H1 (cell line): ENCODE measurements at regions of chr22 and their contacts with region 1.

Region 1: DNA sequence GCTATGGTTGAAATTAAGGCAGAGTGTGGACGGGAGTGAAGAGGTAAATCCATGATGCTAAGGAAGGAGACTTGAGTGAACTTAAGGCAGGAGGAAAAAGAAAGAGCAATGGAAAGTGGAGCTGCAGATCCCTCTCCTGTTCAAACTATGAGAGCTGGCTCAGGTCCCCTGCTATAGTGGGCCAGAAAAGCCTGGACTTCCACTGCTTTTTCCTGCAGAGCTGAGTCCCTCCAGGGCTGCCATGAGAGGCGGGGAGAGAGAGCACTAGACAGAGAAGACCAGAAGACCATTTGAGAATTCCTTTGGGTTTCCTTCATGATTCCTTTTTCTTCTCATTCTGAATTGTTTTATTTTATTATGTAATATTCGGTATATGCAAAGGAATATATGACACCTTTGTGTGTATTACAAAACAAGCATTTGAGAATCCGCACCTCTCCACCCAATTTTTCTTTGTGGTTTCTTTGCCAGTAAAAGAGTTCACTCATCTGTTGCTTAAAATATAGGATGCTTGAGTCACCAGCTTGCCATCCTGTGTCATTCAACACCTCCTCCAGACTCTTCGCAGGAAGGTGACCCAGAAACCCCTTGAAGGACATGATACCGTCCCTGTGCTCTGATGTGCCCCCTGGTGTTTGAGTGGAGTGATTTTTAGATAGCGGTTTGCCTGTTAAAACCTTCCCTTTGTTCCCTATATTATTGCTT is 24.4 kb downstream of the SREBF2 start:
- DNase-seq: peak; percentile 43 to 63
- H3K4me3 ChIP-seq: no peak overlapping the region
- H3K27ac ChIP-seq: no peak overlapping the region
- H3K4me1 ChIP-seq: peaks cover 0 to 1% (median 0%) of the 10 kb centered on the region in 4 experiments; a peak in 1 of 7 replicates
- H3K27me3 ChIP-seq: no peaks in the 10 kb centered on the region
- CTCF ChIP-seq: peak; percentile 35 to 75 (median 59)
- EP300 ChIP-seq: no peak
- POLR2A ChIP-seq: no peak
- RAD21 ChIP-seq: peak; percentile 53 to 62

Region 2: DNA sequence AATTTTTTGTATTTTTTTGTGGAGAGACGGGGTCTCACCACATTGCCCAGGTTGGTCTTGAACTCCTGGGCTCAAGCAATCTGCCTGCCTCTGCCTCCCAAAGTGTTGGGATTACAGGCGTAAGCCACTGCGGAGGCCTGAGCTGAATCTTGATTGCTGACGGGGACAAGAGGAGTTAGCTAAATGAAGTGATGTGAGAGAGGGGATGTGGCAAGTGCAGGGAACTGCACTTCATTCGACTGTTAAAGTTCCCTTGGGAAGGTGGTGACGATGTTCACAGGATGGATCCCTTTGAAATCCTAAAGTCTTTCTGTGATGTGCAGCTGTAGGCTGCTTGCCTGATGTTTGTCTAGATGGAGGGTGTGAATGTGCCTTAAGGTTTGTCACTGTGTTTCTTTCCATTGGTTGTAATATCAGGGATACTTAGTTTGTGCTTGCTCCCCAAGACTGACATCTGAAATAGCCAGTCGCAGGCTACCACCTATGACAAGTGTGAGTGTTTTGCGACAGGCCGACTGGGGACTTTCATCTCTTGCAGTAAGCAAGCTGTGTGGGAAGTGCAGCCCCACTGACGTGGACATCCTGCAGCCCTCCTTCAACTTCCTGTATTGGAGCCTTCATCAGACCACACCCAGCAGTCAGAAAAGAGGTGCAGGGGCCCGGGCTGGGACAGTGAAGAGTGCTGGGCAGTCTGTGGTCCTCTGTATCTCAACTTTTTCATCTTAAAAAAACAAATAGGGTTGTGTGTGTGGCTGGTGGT is 76.4 kb before region 1 on chr22:
- CTCF ChIA-PET with region 1: no interaction called
- POLR2A ChIA-PET with region 1: no interaction called
- DNase-seq: no peak
- H3K4me3 ChIP-seq: no peak overlapping the region
- H3K27ac ChIP-seq: no peak overlapping the region
- H3K4me1 ChIP-seq: no peaks in the 10 kb centered on the region; a peak in 1 of 7 replicates
- H3K27me3 ChIP-seq: no peaks in the 10 kb centered on the region; a peak in 2 of 7 replicates
- CTCF ChIP-seq: no peak
- EP300 ChIP-seq: no peak
- POLR2A ChIP-seq: no peak
- RAD21 ChIP-seq: no peak

Region 3: GRCh38 chr22:41832553-41833368 is 24.5 kb before region 1 on chr22 and contains the start of gene SREBF2:
- CTCF ChIA-PET with region 1: interaction called, 27 read pairs
- POLR2A ChIA-PET with region 1: interaction called, 17 read pairs
- DNase-seq: peak; percentile 97 to 100
- H3K4me3 ChIP-seq: peak within 1 kb of the TSS; percentile 76 to 87 (median 85)
- H3K27ac ChIP-seq: peak within 1 kb of the TSS; percentile 91
- H3K4me1 ChIP-seq: peaks cover 0 to 5% (median 1%) of the 10 kb centered on the region in 4 experiments; a peak in 3 of 7 replicates
- H3K27me3 ChIP-seq: no peaks in the 10 kb centered on the region
- CTCF ChIP-seq: no peak
- EP300 ChIP-seq: peak in 1 of 2 experiments; percentile 83; a peak in 1 of 3 replicates
- POLR2A ChIP-seq: peak; percentile 78 to 85
- RAD21 ChIP-seq: no peak
- total RNA-seq, gene SREBF2: 144 TPM in 2 replicates

Region 4: DNA sequence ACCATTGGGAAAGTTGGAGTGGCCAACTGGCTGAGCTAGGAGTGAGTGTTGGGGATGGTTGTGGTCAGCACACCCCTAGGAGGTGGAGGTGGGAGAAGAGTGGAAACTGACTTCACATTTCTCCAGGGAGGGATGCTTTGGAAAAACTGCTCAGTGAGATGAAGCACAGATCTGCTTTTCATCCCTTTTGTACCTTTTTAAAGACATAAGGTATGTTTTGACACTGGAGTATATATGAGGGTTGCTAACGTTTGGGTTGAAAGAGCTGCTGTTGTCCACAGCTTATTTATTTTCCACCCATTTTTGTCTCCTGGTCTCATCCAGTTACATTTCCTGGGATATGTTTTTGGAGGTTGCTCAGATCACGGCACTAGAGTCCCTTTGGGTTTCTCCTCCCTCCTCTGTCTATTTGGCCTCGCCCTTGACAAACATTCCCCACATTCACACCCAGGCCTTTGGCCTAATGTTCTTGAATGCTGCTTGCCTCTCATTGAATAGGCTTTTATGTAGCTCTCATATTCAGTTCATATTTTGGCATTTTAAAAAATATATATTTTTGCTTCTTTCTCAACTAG is 16.1 kb before region 1 on chr22:
- CTCF ChIA-PET with region 1: interaction called, 33 read pairs
- POLR2A ChIA-PET with region 1: interaction called, 13 read pairs
- DNase-seq: no peak
- H3K4me3 ChIP-seq: no peak overlapping the region
- H3K27ac ChIP-seq: no peak overlapping the region
- H3K4me1 ChIP-seq: peaks cover 4 to 26% (median 16%) of the 10 kb centered on the region in 4 experiments
- H3K27me3 ChIP-seq: no peaks in the 10 kb centered on the region
- CTCF ChIP-seq: no peak
- EP300 ChIP-seq: no peak
- POLR2A ChIP-seq: no peak
- RAD21 ChIP-seq: no peak

Region 5: GRCh38 chr22:42229455-42230149 is 372.3 kb after region 1 on chr22:
- CTCF ChIA-PET with region 1: no interaction called
- POLR2A ChIA-PET with region 1: no interaction called
- DNase-seq: no peak
- H3K4me3 ChIP-seq: no peak overlapping the region
- H3K27ac ChIP-seq: no peak overlapping the region
- H3K4me1 ChIP-seq: peaks cover 0 to 3% (median 0%) of the 10 kb centered on the region in 4 experiments; a peak in 1 of 7 replicates
- H3K27me3 ChIP-seq: no peaks in the 10 kb centered on the region
- CTCF ChIP-seq: no peak
- EP300 ChIP-seq: no peak
- POLR2A ChIP-seq: no peak
- RAD21 ChIP-seq: no peak